Heart left ventricle (tissue), 16 donors: ENCODE measurements at regions of chr6 and their contacts with region 1.

Region 1: DNA sequence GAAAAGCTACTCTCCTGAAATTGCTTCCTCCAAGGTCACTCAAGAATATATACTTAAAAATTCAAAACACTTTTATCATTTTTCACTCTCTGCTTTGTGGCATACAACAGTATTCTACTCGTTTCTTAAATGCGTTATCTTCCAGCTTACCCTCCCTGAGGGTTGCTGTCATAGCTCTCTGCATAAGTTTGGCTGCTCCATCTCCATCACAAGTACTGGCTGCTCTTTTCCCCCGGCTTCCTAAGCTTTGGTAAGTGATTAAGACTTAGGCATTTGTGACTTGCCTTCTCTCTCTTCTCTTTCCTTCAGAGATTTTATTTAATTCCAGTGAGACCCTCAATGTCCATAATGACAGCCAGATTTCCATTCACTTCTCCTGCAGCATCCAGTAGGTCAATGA is 128.3 kb downstream of the NKAIN2 start:
- DNase-seq: no peak
- ATAC-seq: no peak
- H3K4me3 ChIP-seq: no peak overlapping the region
- H3K27ac ChIP-seq: no peak overlapping the region
- H3K4me1 ChIP-seq: no peaks in the 10 kb centered on the region
- H3K27me3 ChIP-seq: no peaks in the 10 kb centered on the region
- CTCF ChIP-seq: no peak
- POLR2A ChIP-seq: no peak

Region 2: GRCh38 chr6:123898665-123899064 is 33.3 kb before region 1 on chr6:
- intact Hi-C with region 1: loop called in 1 of 10 experiments (anchors 5 kb)
- DNase-seq: no peak
- ATAC-seq: no peak
- H3K4me3 ChIP-seq: no peak overlapping the region
- H3K27ac ChIP-seq: no peak overlapping the region
- H3K4me1 ChIP-seq: no peaks in the 10 kb centered on the region
- H3K27me3 ChIP-seq: no peaks in the 10 kb centered on the region
- CTCF ChIP-seq: no peak
- POLR2A ChIP-seq: no peak

Region 3: GRCh38 chr6:123967905-123968304 is 36.0 kb after region 1 on chr6:
- intact Hi-C with region 1: no loop called
- DNase-seq: peak in 1 of 5 donors; percentile 34
- ATAC-seq: no peak
- H3K4me3 ChIP-seq: no peak overlapping the region
- H3K27ac ChIP-seq: no peak overlapping the region
- H3K4me1 ChIP-seq: peaks cover 0 to 4% (median 0%) of the 10 kb centered on the region in 12 donors
- H3K27me3 ChIP-seq: no peaks in the 10 kb centered on the region
- CTCF ChIP-seq: no peak
- POLR2A ChIP-seq: no peak